Right cardiac atrium (tissue), 5 donors: ENCODE measurements at regions of chr15 and their contacts with region 1.

Region 1: DNA sequence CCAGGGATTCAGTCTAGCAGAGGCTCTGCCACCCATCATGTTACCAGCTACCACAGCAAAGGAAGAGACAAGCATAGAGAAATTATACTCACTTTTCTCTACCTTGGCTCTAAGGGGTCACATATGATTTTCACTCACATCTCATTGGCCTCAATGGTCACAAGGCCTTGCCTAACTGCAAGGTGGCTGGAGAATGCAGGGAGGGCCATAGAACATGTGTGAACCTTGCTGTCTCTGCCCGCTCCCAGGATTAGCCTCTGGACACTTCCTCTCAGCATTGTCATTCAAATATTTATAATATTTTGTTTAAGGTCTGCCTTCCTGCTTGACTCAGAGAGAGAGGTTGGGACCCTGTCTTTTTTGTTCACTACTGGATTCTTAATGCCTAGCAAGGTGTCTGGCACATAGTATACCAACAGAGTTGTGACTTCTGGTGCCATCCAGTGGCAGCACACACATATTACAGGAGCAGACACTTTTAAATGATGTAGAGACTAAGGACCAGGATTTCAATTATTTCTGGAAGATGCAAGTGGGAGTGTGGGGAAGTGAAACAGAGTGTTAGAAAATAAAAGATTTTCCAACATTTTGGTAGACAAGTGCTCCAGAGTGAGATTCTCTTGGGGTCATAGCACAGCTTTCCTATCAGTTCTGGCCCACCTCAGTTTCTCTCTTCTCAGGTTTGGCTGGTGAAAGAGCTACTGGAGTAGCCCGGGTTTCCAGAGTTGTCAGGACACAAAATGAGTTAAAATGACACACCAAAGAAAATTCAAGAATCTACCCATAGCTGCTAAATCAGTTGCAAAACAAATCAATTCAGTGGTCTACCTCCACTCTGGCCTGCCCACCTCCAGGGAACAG is 119.0 kb upstream of the RASGRP1 start:
- DNase-seq: peak in 2 of 3 donors; percentile 51 to 57
- ATAC-seq: peak; percentile 69 to 75
- H3K4me3 ChIP-seq: no peak overlapping the region
- H3K27ac ChIP-seq: no peak overlapping the region
- H3K4me1 ChIP-seq: no peaks in the 10 kb centered on the region
- H3K27me3 ChIP-seq: no peaks in the 10 kb centered on the region

Region 2: DNA sequence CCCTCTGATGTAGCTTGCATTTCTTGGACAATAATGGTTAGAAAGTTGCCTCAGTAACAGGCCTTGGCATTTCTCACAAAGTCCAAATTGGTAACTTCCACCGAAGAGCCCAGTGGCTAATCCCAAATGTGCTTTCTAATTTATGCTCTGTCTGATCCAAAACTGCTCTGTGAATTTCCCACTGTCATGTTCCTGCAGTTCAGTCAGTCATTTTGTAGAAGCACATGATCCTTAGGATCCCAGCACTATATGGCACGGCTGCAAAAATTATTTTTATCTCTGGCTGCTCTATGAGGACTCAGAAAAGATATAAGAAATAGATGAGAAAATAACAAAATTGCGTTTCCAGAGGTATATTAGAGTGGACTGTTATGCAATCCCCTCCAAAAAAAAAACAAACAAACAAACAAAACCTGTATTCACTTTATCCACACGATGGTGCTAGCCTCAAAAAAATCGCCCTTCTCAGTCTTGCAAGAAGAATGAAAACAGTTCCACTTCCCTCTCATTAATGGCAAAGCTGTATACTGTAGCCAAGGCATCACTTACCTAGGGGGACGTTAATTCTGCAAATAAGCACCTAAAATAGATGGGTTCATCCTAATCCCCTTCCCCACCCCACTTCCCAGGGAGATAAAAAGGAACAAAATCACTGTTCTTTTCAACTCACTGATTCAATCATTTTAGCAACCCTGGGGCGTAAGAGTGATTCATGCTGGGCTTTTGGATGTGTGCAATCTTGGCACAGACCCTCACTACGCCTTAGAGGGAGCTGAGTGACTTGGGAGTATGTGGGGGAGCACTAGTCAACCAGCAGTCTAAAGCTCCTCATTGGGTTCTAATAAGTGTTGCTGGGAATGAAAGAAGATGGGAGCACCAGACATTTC is 687.9 kb before region 1 on chr15:
- intact Hi-C with region 1: loop called in 2 of 4 experiments (anchors 10 kb)
- DNase-seq: peak in 1 of 3 donors; percentile 35
- ATAC-seq: peak; percentile 81 to 85
- H3K4me3 ChIP-seq: no peak overlapping the region
- H3K27ac ChIP-seq: no peak overlapping the region
- H3K4me1 ChIP-seq: peaks cover 1% of the 10 kb centered on the region
- H3K27me3 ChIP-seq: no peaks in the 10 kb centered on the region

Region 3: GRCh38 chr15:38440353-38441129 is 243.1 kb before region 1 on chr15:
- intact Hi-C with region 1: loop called in 3 of 4 experiments (anchors 5 to 10 kb)
- DNase-seq: peak; percentile 14 to 48 (median 38)
- ATAC-seq: peak; percentile 81 to 83
- H3K4me3 ChIP-seq: no peak overlapping the region
- H3K27ac ChIP-seq: no peak overlapping the region
- H3K4me1 ChIP-seq: no peaks in the 10 kb centered on the region
- H3K27me3 ChIP-seq: no peaks in the 10 kb centered on the region

Region 4: DNA sequence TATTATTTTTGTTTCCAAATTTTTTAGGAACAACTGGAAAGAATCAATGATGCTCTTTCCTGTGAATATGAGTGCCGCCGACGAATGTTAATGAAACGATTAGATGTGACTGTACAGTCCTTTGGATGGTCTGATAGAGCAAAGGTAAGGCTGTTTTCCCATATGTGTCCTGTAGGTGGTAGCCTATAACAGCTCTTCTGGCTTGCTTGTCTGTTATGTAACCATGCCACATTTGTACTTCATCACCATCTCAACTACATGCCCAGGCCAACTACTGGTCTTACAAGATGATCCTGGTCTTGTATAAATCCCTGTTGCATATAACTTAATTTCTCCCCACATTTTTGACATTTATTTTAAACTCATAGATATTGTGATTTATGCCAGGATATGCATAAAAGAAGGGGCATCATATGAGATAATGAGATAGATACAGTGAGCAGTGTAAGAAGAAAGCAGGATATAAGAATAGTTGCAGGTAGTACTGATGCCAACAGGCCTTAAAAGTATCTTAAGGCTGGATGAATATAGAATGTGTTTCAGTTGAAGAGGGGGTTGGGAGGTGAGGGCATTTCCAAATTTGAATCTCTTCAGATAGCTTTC is 209.4 kb before region 1 on chr15:
- intact Hi-C with region 1: loop called in 2 of 4 experiments (anchors 10 kb)
- DNase-seq: no peak
- ATAC-seq: peak; percentile 81 to 86
- H3K4me3 ChIP-seq: no peak overlapping the region
- H3K27ac ChIP-seq: no peak overlapping the region
- H3K4me1 ChIP-seq: no peaks in the 10 kb centered on the region
- H3K27me3 ChIP-seq: no peaks in the 10 kb centered on the region

Region 5: GRCh38 chr15:38563723-38564519 is 119.7 kb before region 1 on chr15:
- intact Hi-C with region 1: loop called in 2 of 4 experiments (anchors 5 to 10 kb)
- DNase-seq: peak; percentile 65 to 88 (median 85)
- ATAC-seq: peak; percentile 90 to 92
- H3K4me3 ChIP-seq: peak overlapping the region; percentile 55
- H3K27ac ChIP-seq: no peak overlapping the region
- H3K4me1 ChIP-seq: no peaks in the 10 kb centered on the region
- H3K27me3 ChIP-seq: no peaks in the 10 kb centered on the region

Region 6: GRCh38 chr15:38647683-38648082 is 35.9 kb before region 1 on chr15:
- intact Hi-C with region 1: no loop called
- DNase-seq: no peak
- ATAC-seq: no peak
- H3K4me3 ChIP-seq: no peak overlapping the region
- H3K27ac ChIP-seq: no peak overlapping the region
- H3K4me1 ChIP-seq: no peaks in the 10 kb centered on the region
- H3K27me3 ChIP-seq: no peaks in the 10 kb centered on the region

Region 7: DNA sequence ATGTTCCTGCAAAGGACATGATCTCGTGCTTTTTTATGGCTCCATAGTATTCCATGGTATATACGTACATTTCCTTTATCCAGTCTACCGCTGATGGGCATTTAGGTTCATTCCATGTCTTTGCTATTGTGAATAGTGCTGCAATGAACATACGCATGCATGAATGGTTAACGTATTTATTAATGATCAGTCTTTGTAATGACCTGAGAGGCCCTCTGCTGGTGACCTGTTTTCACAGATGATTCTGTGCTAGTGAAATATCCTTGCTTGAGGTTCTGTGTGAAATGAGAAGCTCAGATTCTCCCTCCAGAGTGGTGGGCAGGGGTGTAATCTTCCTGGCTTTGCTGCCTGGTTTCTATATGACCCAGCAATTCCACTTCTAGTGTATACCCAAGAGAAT is 41.2 kb after region 1 on chr15:
- intact Hi-C with region 1: no loop called
- DNase-seq: no peak
- ATAC-seq: no peak
- H3K4me3 ChIP-seq: no peak overlapping the region
- H3K27ac ChIP-seq: no peak overlapping the region
- H3K4me1 ChIP-seq: no peaks in the 10 kb centered on the region
- H3K27me3 ChIP-seq: no peaks in the 10 kb centered on the region

Region 8: DNA sequence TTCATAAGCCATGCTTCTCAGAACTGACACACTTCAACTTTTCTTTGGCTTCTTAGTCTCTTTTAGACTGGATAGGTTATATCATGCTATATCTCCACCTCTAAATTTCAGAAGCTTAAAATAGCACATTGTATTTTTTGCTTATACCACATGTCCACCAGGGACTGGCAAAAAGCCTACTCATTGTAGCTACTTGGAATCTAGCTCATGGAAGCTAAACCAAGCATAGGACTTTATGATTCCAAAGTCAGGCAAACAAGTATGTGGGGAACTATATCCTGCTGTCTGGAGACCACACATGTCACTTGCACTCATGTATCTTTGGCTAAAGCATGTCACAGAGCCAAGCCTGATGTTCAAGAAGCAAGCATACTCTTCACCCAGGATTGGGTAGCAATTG is 126.0 kb after region 1 on chr15:
- intact Hi-C with region 1: no loop called
- DNase-seq: no peak
- ATAC-seq: no peak
- H3K4me3 ChIP-seq: no peak overlapping the region
- H3K27ac ChIP-seq: no peak overlapping the region
- H3K4me1 ChIP-seq: peaks cover 2% of the 10 kb centered on the region
- H3K27me3 ChIP-seq: no peaks in the 10 kb centered on the region